ENCODE measurements at regions of chr12 and their contacts with region 1.

Region 1: DNA sequence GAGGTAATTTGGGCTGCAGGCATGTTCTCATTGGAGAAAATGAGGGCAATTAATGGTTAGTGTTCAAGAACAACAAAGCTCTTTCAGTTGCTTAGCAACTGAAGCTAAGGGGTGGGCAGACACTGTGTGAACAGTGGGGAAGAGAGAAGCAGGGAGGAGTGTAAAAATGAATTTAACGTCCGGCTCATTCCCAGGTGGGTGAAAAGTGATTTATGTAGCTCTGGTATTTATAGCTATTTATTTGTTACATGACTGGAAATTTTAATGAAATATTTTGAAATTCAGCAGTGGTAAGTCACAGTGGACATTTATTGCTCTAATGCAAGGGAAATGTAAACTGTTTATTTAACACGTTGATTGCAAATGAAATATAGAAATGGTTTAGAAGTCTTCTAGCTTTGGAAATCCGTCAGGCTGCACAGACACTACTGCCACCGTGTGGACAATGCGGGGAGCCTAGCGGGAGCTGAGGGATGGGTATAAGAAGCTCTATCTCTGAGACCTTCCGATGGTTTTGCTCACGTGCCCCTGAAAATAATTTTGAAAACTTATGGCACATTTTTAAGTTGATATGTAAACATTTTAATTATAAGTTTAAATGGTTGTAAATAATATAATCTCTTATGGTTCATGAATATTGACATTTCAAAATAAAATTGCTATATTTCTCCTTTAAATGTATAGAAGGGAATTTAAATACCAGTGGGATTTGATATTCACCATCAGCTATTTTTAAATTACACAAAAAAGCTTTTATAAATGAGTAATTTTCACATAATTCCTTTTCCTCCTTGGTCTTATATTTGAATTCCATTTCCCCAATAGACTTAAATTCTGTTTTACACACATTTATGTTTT is 54.4 kb downstream of the E2F7 start:
- DNase-seq: peak; percentile 72
- H3K4me3 ChIP-seq: no peak overlapping the region
- H3K27ac ChIP-seq: no peak overlapping the region
- H3K27me3 ChIP-seq: no peaks in the 10 kb centered on the region
- CTCF ChIP-seq: peak; percentile 100

Region 2: GRCh38 chr12:76790564-76791552 is 220.1 kb before region 1 on chr12:
- CTCF ChIA-PET with region 1: interaction called, 41 read pairs
- POLR2A ChIA-PET with region 1: no interaction called
- DNase-seq: no peak
- H3K4me3 ChIP-seq: no peak overlapping the region
- H3K27ac ChIP-seq: no peak overlapping the region
- H3K27me3 ChIP-seq: no peaks in the 10 kb centered on the region
- CTCF ChIP-seq: peak; percentile 55

Region 3: DNA sequence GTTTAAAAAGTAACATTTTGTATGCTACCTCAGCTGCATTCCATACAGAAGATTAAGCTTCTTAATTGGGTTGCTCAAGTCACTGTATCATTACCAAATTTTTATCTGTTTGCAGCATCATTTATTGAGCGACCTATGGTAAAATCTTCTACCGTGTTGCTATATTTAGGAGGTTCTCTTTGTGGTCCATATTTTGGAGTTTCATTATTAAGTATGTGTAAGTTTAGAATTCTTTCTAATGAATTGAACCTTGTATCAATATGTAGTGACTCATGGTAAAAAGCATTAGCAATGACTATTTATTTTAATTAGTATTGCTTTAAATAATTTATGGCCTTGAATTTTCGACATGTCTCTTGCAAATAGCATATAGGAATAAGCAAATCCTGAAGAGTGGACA is 174.3 kb before region 1 on chr12:
- CTCF ChIA-PET with region 1: interaction called, 10 read pairs
- POLR2A ChIA-PET with region 1: no interaction called
- DNase-seq: no peak
- H3K4me3 ChIP-seq: no peak overlapping the region
- H3K27ac ChIP-seq: no peak overlapping the region
- H3K27me3 ChIP-seq: no peaks in the 10 kb centered on the region
- CTCF ChIP-seq: no peak

Region 4: GRCh38 chr12:76878899-76879709 is 131.8 kb before region 1 on chr12 and contains the start of gene CSRP2:
- CTCF ChIA-PET with region 1: interaction called, 41 read pairs
- POLR2A ChIA-PET with region 1: interaction called, 3 read pairs
- DNase-seq: peak; percentile 73
- H3K4me3 ChIP-seq: peak within 1 kb of the TSS; percentile 76
- H3K27ac ChIP-seq: peak within 1 kb of the TSS; percentile 94
- H3K27me3 ChIP-seq: no peaks in the 10 kb centered on the region
- CTCF ChIP-seq: peak; percentile 43
- polyA plus RNA-seq, gene CSRP2: 95.9 and 108 TPM in 2 replicates

Region 5: GRCh38 chr12:77023501-77023900 is 12.6 kb after region 1 on chr12:
- CTCF ChIA-PET with region 1: interaction called, 77 read pairs
- POLR2A ChIA-PET with region 1: no interaction called
- DNase-seq: no peak
- H3K4me3 ChIP-seq: no peak overlapping the region
- H3K27ac ChIP-seq: no peak overlapping the region
- H3K27me3 ChIP-seq: no peaks in the 10 kb centered on the region
- CTCF ChIP-seq: no peak

Region 6: GRCh38 chr12:77218278-77218677 is 207.4 kb after region 1 on chr12:
- CTCF ChIA-PET with region 1: no interaction called
- POLR2A ChIA-PET with region 1: no interaction called
- DNase-seq: no peak
- H3K4me3 ChIP-seq: no peak overlapping the region
- H3K27ac ChIP-seq: no peak overlapping the region
- H3K27me3 ChIP-seq: no peaks in the 10 kb centered on the region
- CTCF ChIP-seq: no peak

Region 7: DNA sequence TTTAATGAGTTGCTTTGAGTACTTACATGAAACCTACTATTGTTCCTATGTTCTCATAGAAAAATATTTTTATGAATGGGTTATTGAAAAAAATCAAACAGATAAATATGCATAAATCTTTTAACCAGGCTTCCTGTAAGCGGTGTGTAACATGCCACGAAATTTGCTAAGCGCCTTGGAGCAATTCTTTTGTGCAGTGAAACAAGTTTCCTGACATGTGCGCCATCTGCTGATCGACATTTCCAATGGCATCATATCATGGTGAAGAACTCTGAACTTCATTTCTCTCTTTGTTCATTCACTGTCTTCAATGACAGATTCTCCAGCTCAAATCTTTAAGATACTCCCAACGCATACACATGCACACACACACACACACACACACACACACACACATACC is 674.2 kb after region 1 on chr12:
- CTCF ChIA-PET with region 1: interaction called, 17 read pairs
- POLR2A ChIA-PET with region 1: no interaction called
- DNase-seq: peak; percentile 62
- H3K4me3 ChIP-seq: no peak overlapping the region
- H3K27ac ChIP-seq: no peak overlapping the region
- H3K27me3 ChIP-seq: no peaks in the 10 kb centered on the region
- CTCF ChIP-seq: peak; percentile 77

Measured in AG04450 (cell line).